Activated naive CD4-positive, alpha-beta T cell treated with anti-CD3 and anti-CD28 coated beads for 36 hours (primary cell): ENCODE measurements at regions of chr17 and their contacts with region 1.

Region 1: GRCh38 chr17:50904521-50905459 is 38.6 kb upstream of the TOB1 start:
- DNase-seq: no peak
- H3K4me3 Mint-ChIP-seq: no peak overlapping the region
- H3K27ac Mint-ChIP-seq: no peak overlapping the region
- H3K4me1 Mint-ChIP-seq: peaks cover 60% of the 10 kb centered on the region
- H3K27me3 Mint-ChIP-seq: no peaks in the 10 kb centered on the region

Region 2: GRCh38 chr17:50661795-50662391 is 242.9 kb before region 1 on chr17:
- CTCF ChIA-PET with region 1: no interaction called
- intact Hi-C with region 1: no loop called
- DNase-seq: peak; percentile 78
- H3K4me3 Mint-ChIP-seq: no peak overlapping the region
- H3K27ac Mint-ChIP-seq: peak overlapping the region; percentile 78
- H3K4me1 Mint-ChIP-seq: peaks cover 14% of the 10 kb centered on the region
- H3K27me3 Mint-ChIP-seq: no peaks in the 10 kb centered on the region

Region 3: GRCh38 chr17:50919321-50920085 is 14.7 kb after region 1 on chr17:
- CTCF ChIA-PET with region 1: interaction called, 3 read pairs
- intact Hi-C with region 1: loop called (anchors 2 kb)
- DNase-seq: peak; percentile 91
- H3K4me3 Mint-ChIP-seq: peak overlapping the region; percentile 50
- H3K27ac Mint-ChIP-seq: peak overlapping the region; percentile 86
- H3K4me1 Mint-ChIP-seq: peaks cover 56% of the 10 kb centered on the region
- H3K27me3 Mint-ChIP-seq: no peaks in the 10 kb centered on the region

Region 4: DNA sequence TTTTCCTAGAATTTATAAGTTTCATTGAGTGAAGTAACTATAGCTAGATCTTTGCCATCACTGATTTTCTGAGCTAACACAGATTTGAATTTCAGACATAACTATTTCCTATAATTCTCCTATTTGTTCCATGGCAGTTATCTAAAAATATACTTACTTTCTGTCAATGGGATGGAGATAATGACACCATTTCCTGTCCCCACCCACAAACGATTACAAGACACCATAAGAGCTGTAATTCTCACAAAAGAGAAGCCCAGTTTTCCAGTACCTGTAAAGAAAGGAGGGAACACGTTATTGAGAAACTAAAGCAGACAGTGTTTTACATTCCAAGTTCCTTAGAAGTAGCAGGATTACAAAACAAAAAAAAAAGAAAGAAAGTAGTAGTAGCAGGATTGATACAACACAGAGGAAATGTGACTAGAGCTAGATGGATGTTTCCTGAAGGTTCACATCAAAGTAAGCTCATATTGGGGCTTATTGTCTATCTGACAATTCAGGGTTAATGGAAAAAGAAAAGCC is 72.2 kb after region 1 on chr17:
- CTCF ChIA-PET with region 1: no interaction called
- intact Hi-C with region 1: no loop called
- DNase-seq: no peak
- H3K4me3 Mint-ChIP-seq: no peak overlapping the region
- H3K27ac Mint-ChIP-seq: peak overlapping the region; percentile 89
- H3K4me1 Mint-ChIP-seq: peaks cover 15% of the 10 kb centered on the region
- H3K27me3 Mint-ChIP-seq: no peaks in the 10 kb centered on the region